ENCODE measurements at regions of chr14 and their contacts with region 1.

Region 1: DNA sequence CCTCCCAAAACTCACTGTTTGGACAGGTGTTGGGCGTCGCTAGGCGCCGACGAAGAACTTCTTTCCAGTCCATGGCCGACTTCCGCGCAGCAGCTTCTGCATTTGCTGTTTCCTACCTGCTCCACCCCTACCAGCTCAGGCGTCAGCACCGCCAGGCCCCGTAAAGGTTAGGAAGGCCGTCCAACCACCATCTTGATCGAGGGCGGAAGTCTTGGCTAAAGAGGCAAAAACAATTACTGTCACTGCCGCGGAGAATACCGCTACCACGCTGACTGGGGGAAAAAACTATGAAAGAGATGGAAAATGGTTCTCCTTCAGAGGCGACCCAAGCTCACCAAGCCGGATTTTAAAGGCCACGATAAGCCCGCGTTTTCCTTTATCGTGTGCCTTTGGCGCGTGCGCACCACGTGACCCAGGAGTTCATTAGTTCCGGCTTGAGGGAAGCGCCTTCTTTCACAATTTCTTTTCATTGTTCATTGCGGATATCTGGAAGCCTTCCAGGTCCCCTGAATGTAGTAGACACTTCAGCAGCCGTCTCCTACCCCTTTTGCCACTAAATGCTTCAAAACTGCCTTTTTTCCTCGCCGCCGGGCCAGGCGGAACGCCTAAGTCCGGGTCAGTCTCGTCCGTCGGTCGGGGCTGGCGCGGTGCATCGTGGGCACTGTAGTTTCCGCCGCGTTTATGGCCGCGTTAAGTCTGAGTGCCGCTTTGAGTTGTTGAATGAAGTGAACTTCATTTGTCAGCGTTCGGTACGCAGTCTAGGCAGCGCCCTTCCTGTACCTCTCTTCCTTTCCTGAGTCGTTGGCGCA is at the starts of genes PPP2R3C and PRORP:
- DNase-seq: peak; percentile 93
- H3K4me3 Mint-ChIP-seq: peak within 1 kb of the TSS; percentile 95
- H3K27ac Mint-ChIP-seq: peak within 1 kb of the TSS; percentile 99
- H3K4me1 Mint-ChIP-seq: peaks cover 64% of the 10 kb centered on the region
- H3K27me3 Mint-ChIP-seq: no peaks in the 10 kb centered on the region
- total RNA-seq, gene PPP2R3C: 44.5 to 47.5 TPM
- total RNA-seq, gene PRORP: 37.9 to 40.8 TPM

Region 2: GRCh38 chr14:34629657-34630529 is 492.2 kb before region 1 on chr14 and contains the start of gene SNX6:
- CTCF ChIA-PET with region 1: no interaction called
- intact Hi-C with region 1: loop called (anchors 1 kb)
- DNase-seq: peak; percentile 85
- H3K4me3 Mint-ChIP-seq: peak within 1 kb of the TSS; percentile 93
- H3K27ac Mint-ChIP-seq: peak within 1 kb of the TSS; percentile 89
- H3K4me1 Mint-ChIP-seq: peaks cover 20% of the 10 kb centered on the region
- H3K27me3 Mint-ChIP-seq: no peaks in the 10 kb centered on the region
- total RNA-seq, gene SNX6: 73.9 to 74.3 TPM

Region 3: GRCh38 chr14:34873591-34874385 is 248.3 kb before region 1 on chr14:
- CTCF ChIA-PET with region 1: no interaction called
- intact Hi-C with region 1: loop called (anchors 1 kb)
- DNase-seq: peak; percentile 95
- H3K4me3 Mint-ChIP-seq: peak overlapping the region; percentile 89
- H3K27ac Mint-ChIP-seq: peak overlapping the region; percentile 98
- H3K4me1 Mint-ChIP-seq: peaks cover 35% of the 10 kb centered on the region
- H3K27me3 Mint-ChIP-seq: no peaks in the 10 kb centered on the region

Region 4: DNA sequence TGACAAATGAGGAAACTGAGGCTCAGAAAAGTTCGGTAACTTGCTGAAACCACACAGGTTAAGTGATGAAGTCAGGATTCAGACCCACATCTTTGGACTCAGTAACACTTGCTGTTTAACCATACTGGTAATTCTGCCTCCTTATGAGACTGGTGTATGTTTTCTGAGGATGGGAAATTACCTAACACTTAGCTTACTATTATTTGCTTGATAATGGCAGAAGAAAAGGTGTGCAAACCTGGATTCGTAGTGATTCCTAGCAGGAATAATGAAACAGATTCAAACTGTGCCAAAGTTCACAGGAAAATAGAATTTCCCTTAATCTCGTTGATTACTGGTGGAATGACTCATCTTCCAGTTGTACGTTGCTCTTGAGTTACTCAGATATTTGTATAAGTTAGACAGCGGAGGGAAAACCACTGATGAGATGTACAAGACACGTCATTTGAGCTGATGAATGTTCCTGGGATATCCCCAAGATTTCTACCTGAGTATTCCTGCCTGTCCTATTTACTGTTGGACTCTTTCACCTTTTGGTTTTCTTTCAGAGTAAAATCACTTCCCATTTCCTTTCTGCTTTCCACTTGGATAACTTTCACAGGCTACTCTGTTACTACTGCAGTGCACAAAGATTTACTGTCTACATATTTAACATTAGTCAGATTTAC is 37.8 kb after region 1 on chr14:
- CTCF ChIA-PET with region 1: interaction called, 4 read pairs
- intact Hi-C with region 1: loop called (anchors 2 kb)
- DNase-seq: no peak
- H3K4me3 Mint-ChIP-seq: no peak overlapping the region
- H3K27ac Mint-ChIP-seq: peak overlapping the region; percentile 32
- H3K4me1 Mint-ChIP-seq: peaks cover 52% of the 10 kb centered on the region
- H3K27me3 Mint-ChIP-seq: no peaks in the 10 kb centered on the region

Region 5: GRCh38 chr14:35292051-35292769 is 170.1 kb after region 1 on chr14 and contains the start of gene PSMA6:
- CTCF ChIA-PET with region 1: no interaction called
- intact Hi-C with region 1: loop called (anchors 1 kb)
- DNase-seq: peak; percentile 99
- H3K4me3 Mint-ChIP-seq: peak within 1 kb of the TSS; percentile 98
- H3K27ac Mint-ChIP-seq: peak within 1 kb of the TSS; percentile 97
- H3K4me1 Mint-ChIP-seq: peaks cover 53% of the 10 kb centered on the region
- H3K27me3 Mint-ChIP-seq: no peaks in the 10 kb centered on the region
- total RNA-seq, gene PSMA6: 433 to 437 TPM

Region 6: GRCh38 chr14:35808076-35808652 is 686.1 kb after region 1 on chr14:
- CTCF ChIA-PET with region 1: no interaction called
- intact Hi-C with region 1: loop called (anchors 1 kb)
- DNase-seq: peak; percentile 61
- H3K4me3 Mint-ChIP-seq: peak overlapping the region; percentile 98
- H3K27ac Mint-ChIP-seq: peak overlapping the region; percentile 86
- H3K4me1 Mint-ChIP-seq: peaks cover 28% of the 10 kb centered on the region
- H3K27me3 Mint-ChIP-seq: no peaks in the 10 kb centered on the region